ENCODE measurements at regions of chr3 and their contacts with region 1.

Region 1: GRCh38 chr3:27712136-27713077 is 9.7 kb downstream of the EOMES start:
- DNase-seq: peak; percentile 79
- H3K4me3 ChIP-seq: peak overlapping the region; percentile 27 to 50 (median 36)
- H3K27ac ChIP-seq: no peak overlapping the region
- H3K4me1 ChIP-seq: peaks cover 23% of the 10 kb centered on the region
- H3K27me3 ChIP-seq: peaks cover 67 to 76% of the 10 kb centered on the region in 2 experiments
- CTCF ChIP-seq: peak; percentile 68 to 90
- POLR2A ChIP-seq: no peak

Region 2: GRCh38 chr3:27699067-27699466 is 13.3 kb before region 1 on chr3:
- CTCF ChIA-PET with region 1: interaction called, 22 read pairs
- POLR2A ChIA-PET with region 1: no interaction called
- dilution Hi-C with region 1: no loop called
- intact Hi-C with region 1: no loop called
- DNase-seq: no peak
- H3K4me3 ChIP-seq: no peak overlapping the region
- H3K27ac ChIP-seq: no peak overlapping the region
- H3K4me1 ChIP-seq: peaks cover 3% of the 10 kb centered on the region
- H3K27me3 ChIP-seq: no peaks in the 10 kb centered on the region
- CTCF ChIP-seq: no peak
- POLR2A ChIP-seq: no peak

Region 3: GRCh38 chr3:27728195-27729087 is 16.0 kb after region 1 on chr3:
- CTCF ChIA-PET with region 1: interaction called, 63 read pairs
- POLR2A ChIA-PET with region 1: no interaction called
- dilution Hi-C with region 1: no loop called
- intact Hi-C with region 1: no loop called
- DNase-seq: no peak
- H3K4me3 ChIP-seq: no peak overlapping the region
- H3K27ac ChIP-seq: no peak overlapping the region
- H3K4me1 ChIP-seq: peaks cover 3% of the 10 kb centered on the region
- H3K27me3 ChIP-seq: peaks cover 79 to 100% of the 10 kb centered on the region in 2 experiments
- CTCF ChIP-seq: peak in 1 of 2 donors; percentile 18
- POLR2A ChIP-seq: no peak

Region 4: GRCh38 chr3:28286595-28286994 is 574.2 kb after region 1 on chr3:
- CTCF ChIA-PET with region 1: interaction called, 46 read pairs
- POLR2A ChIA-PET with region 1: no interaction called
- dilution Hi-C with region 1: no loop called
- intact Hi-C with region 1: loop called (anchors 1 kb)
- DNase-seq: peak; percentile 54
- H3K4me3 ChIP-seq: no peak overlapping the region
- H3K27ac ChIP-seq: no peak overlapping the region
- H3K4me1 ChIP-seq: no peaks in the 10 kb centered on the region
- H3K27me3 ChIP-seq: no peaks in the 10 kb centered on the region
- CTCF ChIP-seq: peak; percentile 27 to 29
- POLR2A ChIP-seq: no peak

Region 5: DNA sequence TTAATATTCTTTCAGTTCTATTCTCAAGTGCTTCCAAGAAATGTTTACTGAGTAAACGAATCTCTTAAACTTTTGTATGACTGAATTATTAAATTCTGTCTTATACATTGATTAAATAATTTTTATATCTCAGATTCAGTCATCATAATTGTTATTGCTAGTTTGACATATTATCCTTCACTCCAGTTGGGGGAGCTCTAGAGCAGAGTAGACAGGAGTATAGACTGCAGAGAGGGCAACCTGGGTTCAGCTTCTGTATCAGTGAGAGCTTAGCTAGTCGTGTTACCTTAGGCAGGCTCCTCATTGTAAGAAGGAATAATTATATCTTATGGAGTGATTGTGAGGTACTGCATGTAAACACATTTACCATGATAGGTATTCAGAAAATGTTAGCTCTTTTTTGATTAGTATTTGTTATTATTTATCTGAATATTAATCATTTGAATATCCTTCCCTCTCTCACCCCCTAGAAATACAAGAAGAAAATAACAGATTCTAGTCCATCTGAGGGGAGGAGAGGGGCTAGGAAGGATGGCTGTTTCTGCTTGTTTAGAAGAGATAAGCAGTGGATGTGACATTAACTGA is 605.1 kb after region 1 on chr3:
- CTCF ChIA-PET with region 1: interaction called, 23 read pairs
- POLR2A ChIA-PET with region 1: no interaction called
- dilution Hi-C with region 1: no loop called
- intact Hi-C with region 1: no loop called
- DNase-seq: peak; percentile 47
- H3K4me3 ChIP-seq: no peak overlapping the region
- H3K27ac ChIP-seq: no peak overlapping the region
- H3K4me1 ChIP-seq: peaks cover 4% of the 10 kb centered on the region
- H3K27me3 ChIP-seq: no peaks in the 10 kb centered on the region
- CTCF ChIP-seq: peak; percentile 45 to 46
- POLR2A ChIP-seq: no peak

Region 6: GRCh38 chr3:28334552-28334951 is 622.1 kb after region 1 on chr3:
- CTCF ChIA-PET with region 1: interaction called, 193 read pairs
- POLR2A ChIA-PET with region 1: no interaction called
- dilution Hi-C with region 1: no loop called
- intact Hi-C with region 1: no loop called
- DNase-seq: no peak
- H3K4me3 ChIP-seq: no peak overlapping the region
- H3K27ac ChIP-seq: no peak overlapping the region
- H3K4me1 ChIP-seq: no peaks in the 10 kb centered on the region
- H3K27me3 ChIP-seq: no peaks in the 10 kb centered on the region
- CTCF ChIP-seq: no peak
- POLR2A ChIP-seq: no peak

Region 7: DNA sequence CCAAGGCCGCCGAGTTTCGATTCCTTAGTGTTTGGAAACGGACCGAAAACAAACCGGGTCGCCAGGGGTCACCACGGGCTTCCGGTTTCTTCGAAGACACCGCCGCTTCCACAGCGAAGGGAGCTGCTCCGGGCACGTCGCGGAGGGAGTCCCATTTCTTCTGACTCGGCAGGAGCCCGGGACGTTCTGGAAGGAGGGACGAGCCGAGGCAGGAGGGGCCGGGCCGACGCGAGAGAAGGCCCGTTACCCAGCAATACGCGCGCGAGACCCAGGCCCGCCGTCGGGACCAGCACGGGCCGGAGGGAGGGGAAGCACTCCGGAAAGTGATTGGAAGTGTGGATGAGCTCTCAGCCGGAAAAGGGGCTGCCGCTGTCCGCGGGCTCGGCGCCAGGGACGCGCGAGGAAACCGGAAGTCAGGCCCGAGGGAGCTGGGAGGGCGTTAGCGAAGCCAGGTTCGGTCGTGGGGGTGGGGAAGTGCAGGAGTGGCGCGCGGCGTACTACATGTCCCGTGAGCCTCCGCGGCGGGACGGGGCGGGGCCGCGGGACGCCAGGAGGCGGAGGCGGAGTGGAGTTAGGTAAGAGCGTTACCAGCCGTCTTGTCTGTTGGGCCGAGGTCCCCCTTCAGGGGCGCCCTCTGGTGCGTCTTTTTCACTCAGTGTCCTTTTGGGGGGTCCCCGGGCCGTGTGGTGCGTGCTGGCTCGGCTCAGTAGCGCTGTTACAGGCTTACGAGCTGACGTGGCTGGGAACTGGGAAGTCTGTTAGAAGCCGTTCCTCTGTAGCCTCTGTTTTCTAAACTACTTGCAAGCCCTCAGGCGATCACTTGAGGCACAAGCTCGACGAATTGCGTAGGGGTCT is 636.4 kb after region 1 on chr3 and contains the starts of genes AZI2 and ZCWPW2:
- CTCF ChIA-PET with region 1: interaction called, 13 read pairs
- POLR2A ChIA-PET with region 1: no interaction called
- dilution Hi-C with region 1: no loop called
- intact Hi-C with region 1: no loop called
- DNase-seq: peak; percentile 95
- H3K4me3 ChIP-seq: peak within 1 kb of the TSS; percentile 59 to 86 (median 69)
- H3K27ac ChIP-seq: peak within 1 kb of the TSS; percentile 98
- H3K4me1 ChIP-seq: peaks cover 16% of the 10 kb centered on the region
- H3K27me3 ChIP-seq: no peaks in the 10 kb centered on the region
- CTCF ChIP-seq: peak in 1 of 2 donors; percentile 21
- POLR2A ChIP-seq: no peak
- total RNA-seq, gene AZI2: 39.5 and 50.0 TPM in 2 replicates
- total RNA-seq, gene ZCWPW2: 0.40 TPM in 1 of 2 replicates, not detected in the other